Activated naive CD4-positive, alpha-beta T cell treated with anti-CD3 and anti-CD28 coated beads for 36 hours (primary cell): ENCODE measurements at regions of chr12 and their contacts with region 1.

Region 1: DNA sequence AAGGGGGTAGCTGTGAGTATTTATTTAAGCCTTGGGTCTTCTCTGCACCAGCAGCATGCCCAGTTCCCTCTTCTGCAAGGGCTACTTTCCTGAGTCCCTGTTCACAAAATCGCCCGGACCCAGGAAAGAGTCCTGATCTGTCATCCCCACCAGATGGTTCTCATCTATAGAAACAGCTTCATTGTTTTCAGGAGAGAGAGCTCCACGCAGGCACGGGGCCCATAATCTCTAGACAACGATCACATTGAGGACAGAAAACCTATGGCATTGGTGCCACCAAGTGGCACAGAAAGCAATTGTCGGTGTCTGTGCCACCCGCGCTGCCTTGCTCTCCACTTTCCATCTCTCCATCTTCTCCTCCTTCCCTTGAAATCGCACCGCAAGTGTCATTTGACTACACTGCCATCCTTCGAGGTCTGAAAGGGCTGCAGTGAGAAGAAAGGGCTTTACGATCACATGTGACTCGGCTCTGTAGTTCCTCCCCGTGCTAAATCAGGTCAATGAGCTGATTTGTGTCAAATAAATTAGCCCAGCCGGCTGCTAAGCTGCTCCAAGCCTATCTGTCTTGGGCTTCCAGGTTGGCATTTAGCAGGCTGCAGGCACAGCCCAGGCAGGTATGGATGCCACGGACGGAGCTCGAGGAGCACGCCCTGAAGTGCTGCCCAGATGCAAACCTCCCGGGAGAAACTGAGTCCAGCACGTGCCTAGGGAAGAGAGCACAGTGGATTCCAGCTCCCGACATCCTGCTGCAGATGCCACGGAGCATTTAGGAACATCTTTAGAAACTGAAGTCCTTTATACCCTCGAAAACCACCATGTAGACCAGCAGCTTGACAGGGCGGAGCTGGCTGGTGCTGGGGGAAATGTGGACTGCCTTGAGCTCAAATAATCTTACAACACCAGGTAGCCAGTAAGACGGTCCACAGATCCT is 28.8 kb downstream of the SPRING1 start:
- DNase-seq: peak; percentile 71
- H3K4me3 Mint-ChIP-seq: peak overlapping the region; percentile 63
- H3K27ac Mint-ChIP-seq: no peak overlapping the region
- H3K4me1 Mint-ChIP-seq: peaks cover 8% of the 10 kb centered on the region
- H3K27me3 Mint-ChIP-seq: peaks cover 6% of the 10 kb centered on the region

Region 2: DNA sequence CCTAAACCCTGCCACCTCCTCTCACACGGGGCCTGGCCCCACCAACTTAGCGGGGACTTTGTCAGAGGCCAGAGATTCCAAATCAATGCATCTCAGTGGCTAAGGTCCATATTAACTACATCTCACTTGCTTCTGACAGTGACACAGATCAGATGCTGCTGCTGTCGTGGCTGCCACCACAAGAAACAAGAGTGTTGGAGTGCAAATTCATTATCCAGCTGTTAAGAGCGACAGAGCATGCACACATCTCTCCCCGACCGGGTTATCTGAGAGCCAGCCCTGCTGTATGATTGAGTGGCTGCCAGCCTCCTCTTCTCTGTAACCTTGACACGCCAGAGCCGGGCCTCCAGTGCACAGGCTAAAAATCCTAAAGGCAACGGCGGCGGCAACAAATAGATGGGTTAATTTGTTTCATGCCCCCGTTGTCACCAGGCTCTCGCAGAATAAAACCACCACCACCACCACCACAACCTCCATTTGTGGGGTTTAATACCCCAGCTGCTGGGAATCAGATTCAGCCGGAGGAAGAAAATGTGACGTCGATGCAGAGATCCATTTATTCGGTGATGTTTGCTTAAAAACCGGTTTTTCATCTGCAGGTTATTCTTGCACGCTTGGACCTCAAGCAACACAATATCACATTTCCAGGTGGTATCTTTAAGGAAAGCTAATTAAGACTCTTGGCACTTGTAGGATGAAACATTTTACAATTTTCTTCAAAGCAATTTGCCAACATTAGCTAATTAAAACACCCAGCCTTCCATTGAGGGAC is 11.2 kb before region 1 on chr12:
- CTCF ChIA-PET with region 1: interaction called, 14 read pairs
- intact Hi-C with region 1: no loop called
- DNase-seq: no peak
- H3K4me3 Mint-ChIP-seq: no peak overlapping the region
- H3K27ac Mint-ChIP-seq: no peak overlapping the region
- H3K4me1 Mint-ChIP-seq: peaks cover 8% of the 10 kb centered on the region
- H3K27me3 Mint-ChIP-seq: peaks cover 27% of the 10 kb centered on the region